Heart left ventricle (tissue), 16 donors: ENCODE measurements at regions of chr12 and their contacts with region 1.

Region 1: GRCh38 chr12:75699728-75700496 is 188.5 kb upstream of the KRR1 start:
- DNase-seq: peak in 1 of 5 donors; percentile 30
- ATAC-seq: peak in 3 of 4 donors; percentile 50 to 82 (median 74)
- H3K4me3 ChIP-seq: no peak overlapping the region
- H3K27ac ChIP-seq: peak overlapping the region in 7 of 12 donors; percentile 4 to 34 (median 14)
- H3K4me1 ChIP-seq: peaks cover 0 to 14% (median 6%) of the 10 kb centered on the region in 12 donors
- H3K27me3 ChIP-seq: no peaks in the 10 kb centered on the region
- CTCF ChIP-seq: no peak
- POLR2A ChIP-seq: no peak

Region 2: GRCh38 chr12:75658901-75659383 is 41.0 kb before region 1 on chr12:
- intact Hi-C with region 1: loop called in 1 of 10 experiments (anchors 5 kb)
- DNase-seq: no peak
- ATAC-seq: peak in 2 of 4 donors; percentile 62 to 65
- H3K4me3 ChIP-seq: no peak overlapping the region
- H3K27ac ChIP-seq: no peak overlapping the region
- H3K4me1 ChIP-seq: peaks cover 0 to 17% (median 0%) of the 10 kb centered on the region in 12 donors
- H3K27me3 ChIP-seq: no peaks in the 10 kb centered on the region
- CTCF ChIP-seq: no peak
- POLR2A ChIP-seq: no peak